ENCODE measurements at regions of chr6 and their contacts with region 1.

Region 1: DNA sequence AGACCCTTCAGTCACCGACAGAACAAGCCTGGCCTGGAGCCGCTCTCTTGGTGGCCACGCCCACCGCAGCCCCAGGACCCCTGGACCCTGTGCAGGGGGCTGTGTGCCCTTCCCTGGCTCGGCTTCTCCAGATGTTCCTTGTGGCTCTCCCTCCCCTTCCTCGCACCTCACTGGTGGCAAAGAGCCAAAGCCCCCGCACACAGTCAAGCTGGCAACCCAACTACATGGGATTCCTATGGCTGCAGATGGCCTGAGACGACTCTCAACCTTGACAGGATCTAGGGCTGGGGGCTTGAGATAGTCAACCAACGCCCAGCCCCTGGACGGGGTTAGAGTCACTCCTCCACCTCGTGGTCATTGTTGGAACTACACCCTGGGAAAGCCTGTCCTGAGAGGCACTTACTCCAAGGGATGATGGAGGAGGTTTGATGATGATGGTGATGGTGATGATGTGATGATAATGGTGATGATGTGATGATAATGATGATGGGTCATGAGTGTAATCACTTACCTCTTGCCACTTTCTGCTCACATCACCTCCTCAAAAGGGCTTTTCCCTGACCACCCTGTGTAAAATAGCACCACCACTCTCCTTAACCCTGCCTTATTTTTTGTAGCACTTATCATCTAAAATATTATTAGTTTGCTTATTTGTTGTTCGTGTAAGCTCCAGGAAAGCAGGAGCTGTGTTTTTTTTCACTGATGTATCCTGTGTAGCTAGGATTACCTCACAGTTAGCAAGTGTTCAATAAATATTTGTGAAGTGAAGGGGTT is 278.4 kb downstream of the LRFN2 start:
- DNase-seq: no peak
- H3K4me3 ChIP-seq: no peak overlapping the region
- H3K27ac ChIP-seq: no peak overlapping the region
- H3K4me1 ChIP-seq: no peaks in the 10 kb centered on the region
- H3K27me3 ChIP-seq: peaks cover 0 to 16% (median 0%) of the 10 kb centered on the region in 3 donors
- CTCF ChIP-seq: peak; percentile 28 to 84 (median 70)
- EP300 ChIP-seq: no peak
- POLR2A ChIP-seq: no peak

Region 2: GRCh38 chr6:39361657-39362486 is 946.8 kb before region 1 on chr6:
- intact Hi-C with region 1: loop called (anchors 5 kb)
- DNase-seq: peak; percentile 81
- H3K4me3 ChIP-seq: no peak overlapping the region
- H3K27ac ChIP-seq: peak overlapping the region in 1 of 4 donors; percentile 14
- H3K4me1 ChIP-seq: peaks cover 0 to 5% (median 0%) of the 10 kb centered on the region in 4 donors
- H3K27me3 ChIP-seq: no peaks in the 10 kb centered on the region
- CTCF ChIP-seq: peak; percentile 54 to 93 (median 58)
- EP300 ChIP-seq: no peak
- POLR2A ChIP-seq: no peak

Region 3: DNA sequence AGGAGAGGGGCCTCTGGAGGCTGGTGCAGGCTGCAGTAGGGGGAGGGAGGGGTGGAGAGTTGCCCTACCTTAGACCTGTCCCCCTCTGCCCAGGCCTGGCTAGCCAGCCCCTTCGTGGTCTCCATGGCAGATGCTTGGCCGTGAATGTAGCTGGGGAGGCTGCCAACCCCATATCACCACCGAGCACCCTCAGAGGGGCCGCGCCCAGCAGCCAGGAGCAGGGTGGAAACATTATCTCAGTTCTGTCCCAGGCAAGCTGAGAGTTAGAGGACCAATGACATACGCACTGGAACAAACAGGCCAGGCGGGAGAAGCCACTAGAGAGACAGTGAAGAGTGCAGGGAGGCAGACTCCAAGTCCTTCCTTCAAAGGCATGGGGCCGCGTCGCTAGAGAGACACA is 212.0 kb after region 1 on chr6:
- intact Hi-C with region 1: no loop called
- DNase-seq: no peak
- H3K4me3 ChIP-seq: no peak overlapping the region
- H3K27ac ChIP-seq: no peak overlapping the region
- H3K4me1 ChIP-seq: no peaks in the 10 kb centered on the region
- H3K27me3 ChIP-seq: peaks cover 0 to 8% (median 0%) of the 10 kb centered on the region in 3 donors
- CTCF ChIP-seq: no peak
- EP300 ChIP-seq: no peak
- POLR2A ChIP-seq: no peak